SK-N-SH (cell line): ENCODE measurements at regions of chr19 and their contacts with region 1.

Region 1: DNA sequence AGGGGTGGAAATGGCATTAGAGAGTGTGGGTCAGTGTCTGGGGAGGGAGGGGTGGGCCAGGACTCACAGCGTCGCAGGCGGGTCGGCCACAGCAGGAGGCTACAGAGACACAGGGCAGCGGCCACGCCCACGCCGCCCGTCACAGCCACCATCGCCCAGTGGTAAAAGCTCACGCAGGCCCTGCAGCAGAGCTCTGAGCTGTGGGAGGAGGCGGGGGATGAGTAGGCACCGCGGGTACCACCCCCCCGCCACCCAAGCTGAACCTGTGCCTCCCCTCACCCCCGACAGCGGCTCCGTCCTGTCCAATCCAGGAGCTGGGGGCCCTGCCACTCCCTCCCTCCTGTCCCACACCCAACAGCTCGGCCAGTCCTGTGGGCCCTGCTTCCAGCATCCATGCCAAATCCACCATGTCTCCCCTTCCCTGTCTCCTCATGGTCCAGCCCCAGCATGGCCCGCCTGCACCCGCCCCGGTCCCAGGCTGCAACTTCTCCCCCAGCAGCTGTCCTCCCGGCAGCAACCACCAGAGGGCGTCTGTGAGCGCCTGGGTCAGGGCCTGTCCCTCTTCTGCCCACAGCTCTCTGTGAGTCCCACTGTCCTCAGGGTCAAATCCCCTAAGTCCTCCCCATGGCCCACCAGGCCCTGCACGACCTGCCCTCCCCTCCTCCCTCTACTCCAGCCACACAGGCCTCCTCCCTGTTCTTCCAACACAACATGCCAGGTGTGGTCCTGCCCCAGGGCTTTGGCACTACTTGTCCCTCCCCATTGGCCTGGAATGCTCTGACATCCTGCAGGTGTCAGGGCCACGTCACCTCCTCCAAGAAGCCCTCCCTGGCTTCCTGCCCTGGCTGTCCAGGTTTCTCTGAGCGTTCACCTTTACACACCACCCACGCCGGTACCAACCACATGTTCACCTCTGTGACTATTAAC is 6.0 kb downstream of the TEKTIP1 start:
- DNase-seq: peak; percentile 94
- H3K4me3 ChIP-seq: no peak overlapping the region; a peak in 1 of 4 replicates
- H3K27ac ChIP-seq: no peak overlapping the region
- H3K4me1 ChIP-seq: no peaks in the 10 kb centered on the region; a peak in 1 of 4 replicates
- H3K27me3 ChIP-seq: no peaks in the 10 kb centered on the region
- CTCF ChIP-seq: peak; percentile 88
- EP300 ChIP-seq: no peak
- RAD21 ChIP-seq: peak; percentile 63

Region 2: GRCh38 chr19:3132971-3133792 is 411.8 kb before region 1 on chr19:
- CTCF ChIA-PET with region 1: no interaction called
- POLR2A ChIA-PET with region 1: no interaction called
- DNase-seq: peak; percentile 55
- H3K4me3 ChIP-seq: no peak overlapping the region
- H3K27ac ChIP-seq: peak overlapping the region in 1 of 2 experiments; percentile 6; a peak in 1 of 4 replicates
- H3K4me1 ChIP-seq: peaks cover 0 to 2% of the 10 kb centered on the region in 2 experiments; a peak in 1 of 4 replicates
- H3K27me3 ChIP-seq: no peaks in the 10 kb centered on the region
- CTCF ChIP-seq: no peak
- EP300 ChIP-seq: no peak
- RAD21 ChIP-seq: no peak

Region 3: DNA sequence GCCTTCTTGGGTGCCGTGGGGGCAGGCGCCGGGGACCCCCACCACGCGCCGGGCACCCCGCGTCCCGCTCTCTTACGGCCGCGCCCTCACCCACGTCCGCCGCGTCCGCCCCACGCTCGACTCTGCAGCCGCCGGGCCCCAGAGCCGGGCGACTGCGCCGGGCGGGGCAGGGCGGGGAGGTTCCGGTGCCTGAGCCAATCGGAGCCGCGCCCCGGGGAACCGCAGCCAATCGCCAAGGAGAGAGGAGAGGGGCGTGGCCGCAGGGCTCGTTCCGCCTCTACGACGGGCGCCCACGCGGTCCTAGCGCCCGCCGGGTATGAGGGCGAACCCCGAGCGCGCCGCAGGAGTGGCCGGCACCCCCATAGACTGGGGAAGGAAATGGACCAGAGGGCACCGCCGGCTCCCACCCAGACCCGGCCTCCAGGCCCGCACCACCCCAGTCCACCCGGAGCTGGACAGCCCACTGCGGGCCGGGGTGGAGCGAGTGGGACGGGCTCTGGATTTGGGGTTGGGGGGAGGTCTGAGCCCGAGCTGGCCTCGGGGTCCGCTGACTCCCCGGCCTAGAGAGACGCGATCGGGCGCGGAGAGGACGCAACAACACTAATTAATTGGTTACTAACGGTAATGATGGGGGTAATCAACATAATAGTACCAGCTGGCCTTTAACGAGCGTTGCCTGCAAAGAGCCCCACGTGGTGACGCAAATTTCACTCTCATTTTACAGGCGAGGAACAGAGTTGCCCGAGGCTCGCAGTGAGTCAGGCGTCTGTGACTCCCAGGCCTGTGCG is 12.7 kb after region 1 on chr19 and contains the start of gene MFSD12:
- CTCF ChIA-PET with region 1: interaction called, 73 read pairs
- POLR2A ChIA-PET with region 1: no interaction called
- DNase-seq: peak; percentile 100
- H3K4me3 ChIP-seq: peak within 1 kb of the TSS; percentile 67 to 98
- H3K27ac ChIP-seq: peak within 1 kb of the TSS; percentile 59 to 69; a peak in 3 of 4 replicates
- H3K4me1 ChIP-seq: peaks cover 3 to 15% of the 10 kb centered on the region in 2 experiments; a peak in 1 of 4 replicates
- H3K27me3 ChIP-seq: no peaks in the 10 kb centered on the region
- CTCF ChIP-seq: no peak
- EP300 ChIP-seq: no peak
- RAD21 ChIP-seq: no peak
- polyA plus RNA-seq, gene MFSD12: 45.9 and 53.3 TPM in 2 replicates

Region 4: DNA sequence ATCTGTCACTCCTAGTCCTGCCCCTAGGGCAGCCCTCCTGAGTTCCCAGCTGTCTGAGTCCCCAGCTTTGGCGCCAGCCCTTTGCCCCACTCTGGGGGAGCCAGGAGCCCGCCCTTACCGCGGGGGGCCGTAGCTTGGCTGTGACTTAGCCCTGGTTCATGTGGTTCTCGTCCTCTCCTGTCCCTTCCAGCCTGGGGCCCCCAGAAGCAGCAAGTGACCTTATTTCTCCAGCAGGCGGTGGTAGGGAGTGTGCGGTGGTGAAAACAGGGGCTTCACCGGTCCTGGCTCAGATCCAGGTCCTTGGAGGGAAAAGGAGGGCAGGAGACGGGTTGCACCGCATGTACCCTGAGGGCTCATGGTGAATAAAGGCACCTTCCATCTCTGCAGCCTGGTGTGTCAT is 48.2 kb after region 1 on chr19:
- CTCF ChIA-PET with region 1: interaction called, 20 read pairs
- POLR2A ChIA-PET with region 1: no interaction called
- DNase-seq: no peak
- H3K4me3 ChIP-seq: no peak overlapping the region
- H3K27ac ChIP-seq: no peak overlapping the region
- H3K4me1 ChIP-seq: no peaks in the 10 kb centered on the region
- H3K27me3 ChIP-seq: no peaks in the 10 kb centered on the region
- CTCF ChIP-seq: peak; percentile 10; the same call in 1 of the 2 replicates
- EP300 ChIP-seq: no peak
- RAD21 ChIP-seq: no peak

Region 5: GRCh38 chr19:3618144-3618810 is 73.3 kb after region 1 on chr19:
- CTCF ChIA-PET with region 1: interaction called, 11 read pairs
- POLR2A ChIA-PET with region 1: no interaction called
- DNase-seq: peak; percentile 98
- H3K4me3 ChIP-seq: no peak overlapping the region; a peak in 1 of 4 replicates
- H3K27ac ChIP-seq: no peak overlapping the region
- H3K4me1 ChIP-seq: peaks cover 0 to 3% of the 10 kb centered on the region in 2 experiments; a peak in 1 of 4 replicates
- H3K27me3 ChIP-seq: no peaks in the 10 kb centered on the region
- CTCF ChIP-seq: peak; percentile 88
- EP300 ChIP-seq: no peak
- RAD21 ChIP-seq: peak; percentile 70